Activated T-helper 2 cell treated with anti-CD3 and anti-CD28 coated beads, Interferon-gamma antibody, Interleukin-2, Interleukin-4, amounts not matched to agents 10 μg/mL and 5 μg/mL and 100 μg/mL, durations not matched to agents 14 hours and 24 hours and 36 hours (primary cell): ENCODE measurements at regions of chr7 and their contacts with region 1.

Region 1: GRCh38 chr7:2529161-2530070 is 9.8 kb downstream of the LFNG start:
- DNase-seq: peak; percentile 38
- H3K4me3 Mint-ChIP-seq: peak overlapping the region; percentile 72
- H3K27ac Mint-ChIP-seq: peak overlapping the region; percentile 97
- H3K4me1 Mint-ChIP-seq: peaks cover 34% of the 10 kb centered on the region
- H3K27me3 Mint-ChIP-seq: no peaks in the 10 kb centered on the region

Region 2: DNA sequence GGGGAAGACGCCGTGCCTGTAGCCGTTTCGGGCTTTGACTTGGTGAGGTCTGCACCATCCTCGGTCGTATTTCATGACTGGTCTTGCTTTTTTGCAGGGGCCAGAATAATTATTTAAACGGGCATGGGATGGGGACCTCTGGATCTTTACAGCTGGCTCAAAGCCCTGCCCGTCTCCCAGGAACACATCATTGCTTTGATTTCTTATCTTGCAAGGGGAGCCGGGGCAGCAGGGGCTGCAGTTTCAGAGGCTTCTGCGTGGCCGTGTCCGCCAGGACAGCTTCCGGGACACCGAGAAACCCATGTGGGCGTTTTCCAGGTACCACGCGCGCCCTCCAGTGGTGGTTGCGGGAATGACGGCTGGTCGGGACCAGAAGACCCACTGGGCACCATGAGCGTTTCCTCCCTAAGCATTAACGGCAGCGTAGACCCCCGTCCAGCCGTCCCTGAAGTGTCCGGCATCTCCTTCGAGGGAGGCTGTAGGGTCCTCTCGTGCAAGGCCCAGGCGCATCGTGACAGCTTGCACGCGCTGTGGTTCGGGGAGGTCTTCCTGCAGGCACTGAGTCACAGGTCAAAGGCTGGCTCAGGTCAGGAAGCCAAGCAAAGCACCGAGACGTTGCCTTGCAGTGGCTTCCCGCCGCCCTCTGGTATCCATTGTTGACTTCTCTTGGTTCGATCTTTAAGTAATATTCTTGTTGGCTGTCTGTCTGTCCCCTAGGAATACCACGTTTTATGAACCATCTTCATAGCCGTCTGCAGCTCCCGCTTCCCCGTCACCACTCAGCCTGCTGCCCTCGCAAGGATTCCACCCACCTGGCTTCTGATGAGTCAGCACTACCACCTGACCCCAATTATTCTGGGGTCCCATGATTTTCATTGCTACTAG is 1353.2 kb before region 1 on chr7:
- intact Hi-C with region 1: no loop called
- DNase-seq: peak; percentile 74
- H3K4me3 Mint-ChIP-seq: peak overlapping the region; percentile 17
- H3K27ac Mint-ChIP-seq: peak overlapping the region; percentile 49
- H3K4me1 Mint-ChIP-seq: peaks cover 14% of the 10 kb centered on the region
- H3K27me3 Mint-ChIP-seq: no peaks in the 10 kb centered on the region

Region 3: GRCh38 chr7:2477447-2478398 is 51.7 kb before region 1 on chr7:
- intact Hi-C with region 1: loop called (anchors 1 kb)
- DNase-seq: peak; percentile 57
- H3K4me3 Mint-ChIP-seq: no peak overlapping the region
- H3K27ac Mint-ChIP-seq: no peak overlapping the region
- H3K4me1 Mint-ChIP-seq: peaks cover 2% of the 10 kb centered on the region
- H3K27me3 Mint-ChIP-seq: peaks cover 3% of the 10 kb centered on the region

Region 4: DNA sequence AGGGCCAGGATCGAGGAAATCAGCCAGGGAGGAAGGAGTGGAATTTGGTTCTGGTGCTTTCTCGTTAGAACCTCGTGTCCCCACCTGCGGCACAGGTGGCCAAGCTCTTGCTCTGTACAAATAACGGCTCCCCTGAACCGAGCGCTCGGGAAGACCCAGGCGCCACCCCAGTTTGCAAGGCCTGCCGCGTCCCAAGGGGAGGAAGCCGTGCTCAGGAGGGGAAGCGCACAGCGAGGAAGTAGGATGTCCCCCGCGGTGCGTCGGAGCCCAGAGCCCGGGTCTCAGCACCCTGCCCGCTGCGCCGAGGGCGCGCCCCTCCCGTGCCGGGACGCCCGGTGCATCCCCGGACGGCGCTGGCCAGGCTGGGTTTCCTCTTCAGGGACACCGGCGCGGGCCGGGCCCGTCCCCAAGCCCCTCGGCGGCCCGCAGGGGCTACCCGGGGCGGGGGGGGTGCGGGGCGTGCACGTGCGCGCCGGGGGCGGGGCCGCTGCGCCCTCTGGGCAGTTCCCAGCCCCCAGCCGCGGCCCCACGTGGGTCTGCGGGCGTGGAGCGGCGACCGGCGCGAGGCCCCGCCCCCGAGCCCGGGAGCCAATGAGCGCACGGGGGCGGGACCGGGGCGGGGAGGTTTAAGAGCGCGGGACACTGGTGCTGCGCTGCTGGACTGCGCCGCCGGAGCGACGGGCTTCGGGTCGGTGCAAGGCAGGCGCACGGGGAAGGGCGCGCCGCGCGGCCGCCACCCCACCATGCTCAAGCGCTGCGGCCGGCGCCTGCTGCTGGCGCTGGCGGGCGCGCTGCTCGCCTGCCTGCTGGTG is 10.1 kb before region 1 on chr7 and contains the start of gene LFNG:
- intact Hi-C with region 1: loop called (anchors 1 kb)
- DNase-seq: peak; percentile 82
- H3K4me3 Mint-ChIP-seq: peak within 1 kb of the TSS; percentile 98
- H3K27ac Mint-ChIP-seq: peak within 1 kb of the TSS; percentile 79
- H3K4me1 Mint-ChIP-seq: peaks cover 27% of the 10 kb centered on the region
- H3K27me3 Mint-ChIP-seq: peaks cover 3% of the 10 kb centered on the region
- total RNA-seq, gene LFNG: 41.0 and 45.6 TPM in 2 replicates

Region 5: GRCh38 chr7:2632733-2633537 is 103.5 kb after region 1 on chr7:
- intact Hi-C with region 1: loop called (anchors 2 kb)
- DNase-seq: peak; percentile 37
- H3K4me3 Mint-ChIP-seq: peak overlapping the region; percentile 97
- H3K27ac Mint-ChIP-seq: peak overlapping the region; percentile 93
- H3K4me1 Mint-ChIP-seq: peaks cover 13% of the 10 kb centered on the region
- H3K27me3 Mint-ChIP-seq: no peaks in the 10 kb centered on the region